Activated CD4-positive, alpha-beta T cell treated with anti-CD3 and anti-CD28 coated beads for 36 hours (primary cell): ENCODE measurements at regions of chr7 and their contacts with region 1.

Region 1: GRCh38 chr7:99364961-99365817 is 9.3 kb upstream of the ARPC1B start:
- DNase-seq: peak; percentile 75
- ATAC-seq: peak; percentile 93
- H3K4me3 Mint-ChIP-seq: no peak overlapping the region
- H3K27ac Mint-ChIP-seq: no peak overlapping the region
- H3K4me1 Mint-ChIP-seq: no peaks in the 10 kb centered on the region
- H3K27me3 Mint-ChIP-seq: no peaks in the 10 kb centered on the region

Region 2: GRCh38 chr7:99386584-99387238 is 21.5 kb after region 1 on chr7:
- CTCF ChIA-PET with region 1: interaction called, 3 read pairs
- POLR2A ChIA-PET with region 1: no interaction called
- intact Hi-C with region 1: loop called in 1 of 2 experiments (anchors 1 kb)
- DNase-seq: peak; percentile 58
- ATAC-seq: peak; percentile 71
- H3K4me3 Mint-ChIP-seq: no peak overlapping the region
- H3K27ac Mint-ChIP-seq: peak overlapping the region; percentile 37
- H3K4me1 Mint-ChIP-seq: peaks cover 27% of the 10 kb centered on the region
- H3K27me3 Mint-ChIP-seq: no peaks in the 10 kb centered on the region

Region 3: GRCh38 chr7:99447943-99448342 is 82.8 kb after region 1 on chr7:
- CTCF ChIA-PET with region 1: no interaction called
- POLR2A ChIA-PET with region 1: interaction called, 16 read pairs
- intact Hi-C with region 1: no loop called
- DNase-seq: peak; percentile 27
- ATAC-seq: no peak
- H3K4me3 Mint-ChIP-seq: no peak overlapping the region
- H3K27ac Mint-ChIP-seq: no peak overlapping the region
- H3K4me1 Mint-ChIP-seq: peaks cover 3% of the 10 kb centered on the region
- H3K27me3 Mint-ChIP-seq: no peaks in the 10 kb centered on the region

Region 4: DNA sequence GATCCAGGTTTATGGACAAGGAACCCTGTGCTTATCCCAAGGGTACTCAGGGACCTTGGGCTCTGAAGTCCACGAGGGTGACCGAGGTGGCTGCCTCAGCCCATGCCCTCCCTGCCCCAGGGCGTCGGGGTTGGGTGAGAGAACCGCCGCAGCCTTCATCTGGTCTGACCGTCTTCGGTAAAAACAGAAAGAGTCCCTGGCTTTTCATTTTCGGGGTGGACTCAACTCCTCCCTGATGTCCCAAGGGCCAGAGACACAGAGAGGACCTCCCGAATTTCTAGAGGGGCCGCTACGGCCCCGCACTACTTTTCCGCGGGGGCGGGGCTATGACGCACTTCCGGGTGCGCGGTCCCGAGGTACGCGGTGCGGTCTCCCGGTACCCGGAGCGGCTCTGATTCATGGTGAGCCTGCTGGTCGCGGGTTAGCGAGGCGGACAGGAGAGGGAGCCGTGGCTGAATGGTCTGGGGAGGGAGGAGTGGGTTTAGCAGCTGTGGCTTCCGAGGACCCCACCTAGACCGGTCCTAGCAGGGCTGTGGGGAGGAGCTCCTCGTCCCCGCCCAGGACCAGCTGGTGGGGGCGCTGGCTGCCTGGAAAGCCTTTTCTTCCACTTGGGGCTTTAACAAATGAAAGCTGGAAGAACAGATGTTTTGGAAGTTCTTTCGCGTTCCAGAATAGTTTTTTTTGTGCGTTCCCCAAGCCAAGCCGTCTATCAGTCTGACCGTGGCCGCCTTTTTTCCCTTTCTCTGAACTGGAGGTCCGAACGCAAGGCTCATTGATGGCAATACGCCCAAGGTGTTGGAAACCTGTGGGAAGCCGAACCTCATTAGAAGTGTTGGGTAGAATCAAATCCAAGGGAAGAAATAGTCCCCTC is 684.5 kb after region 1 on chr7 and contains the start of gene ZSCAN21:
- CTCF ChIA-PET with region 1: no interaction called
- POLR2A ChIA-PET with region 1: no interaction called
- intact Hi-C with region 1: no loop called
- DNase-seq: peak; percentile 89
- ATAC-seq: peak; percentile 90
- H3K4me3 Mint-ChIP-seq: peak within 1 kb of the TSS; percentile 85
- H3K27ac Mint-ChIP-seq: peak within 1 kb of the TSS; percentile 86
- H3K4me1 Mint-ChIP-seq: peaks cover 17% of the 10 kb centered on the region
- H3K27me3 Mint-ChIP-seq: no peaks in the 10 kb centered on the region
- total RNA-seq, gene ZSCAN21: 6.4 to 7.4 TPM